ENCODE measurements at regions of chr20 and their contacts with region 1.

Region 1: GRCh38 chr20:52083627-52084232 is 107.8 kb downstream of the ZFP64 start:
- DNase-seq: peak; percentile 57
- H3K4me3 ChIP-seq: no peak overlapping the region
- H3K27ac ChIP-seq: no peak overlapping the region
- H3K4me1 ChIP-seq: no peaks in the 10 kb centered on the region
- H3K27me3 ChIP-seq: no peaks in the 10 kb centered on the region
- CTCF ChIP-seq: peak; percentile 37

Region 2: DNA sequence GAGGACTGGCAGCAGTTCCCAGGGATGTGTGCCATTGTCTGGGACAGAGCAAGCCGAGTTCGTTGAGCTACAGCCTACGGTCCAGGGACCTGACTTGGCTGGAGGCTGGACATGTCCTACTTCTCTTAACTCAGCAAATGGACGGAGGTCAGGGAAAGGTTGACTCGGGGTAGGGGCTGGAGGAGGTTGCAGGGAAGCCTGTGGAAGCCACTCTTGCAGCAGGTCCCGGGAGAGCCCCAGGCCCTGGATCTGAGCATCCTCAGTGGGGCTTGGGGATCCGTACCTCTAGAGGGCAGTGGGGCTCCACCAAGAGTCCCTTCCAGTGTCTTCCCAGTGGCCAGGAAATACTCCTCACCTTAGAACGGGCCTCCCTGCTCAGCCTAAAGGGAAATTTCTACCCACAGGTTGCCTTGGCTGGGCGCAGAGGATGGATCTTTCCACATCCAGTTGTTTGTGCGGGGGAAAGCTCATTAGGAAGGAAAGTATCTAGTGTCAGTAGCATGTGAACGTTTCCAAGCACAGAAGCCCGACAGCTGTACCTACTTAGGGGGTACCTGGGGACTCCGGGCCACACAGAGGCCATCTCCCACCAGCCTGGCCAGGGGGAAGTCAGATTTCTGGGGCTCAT is 711.4 kb before region 1 on chr20:
- intact Hi-C with region 1: loop called (anchors 10 kb)
- DNase-seq: peak; percentile 49
- H3K4me3 ChIP-seq: no peak overlapping the region
- H3K27ac ChIP-seq: no peak overlapping the region
- H3K4me1 ChIP-seq: no peaks in the 10 kb centered on the region
- H3K27me3 ChIP-seq: no peaks in the 10 kb centered on the region
- CTCF ChIP-seq: peak; percentile 73

Region 3: GRCh38 chr20:51579137-51579536 is 504.6 kb before region 1 on chr20:
- intact Hi-C with region 1: no loop called
- DNase-seq: no peak
- H3K4me3 ChIP-seq: no peak overlapping the region
- H3K27ac ChIP-seq: no peak overlapping the region
- H3K4me1 ChIP-seq: no peaks in the 10 kb centered on the region
- H3K27me3 ChIP-seq: no peaks in the 10 kb centered on the region
- CTCF ChIP-seq: no peak

Region 4: DNA sequence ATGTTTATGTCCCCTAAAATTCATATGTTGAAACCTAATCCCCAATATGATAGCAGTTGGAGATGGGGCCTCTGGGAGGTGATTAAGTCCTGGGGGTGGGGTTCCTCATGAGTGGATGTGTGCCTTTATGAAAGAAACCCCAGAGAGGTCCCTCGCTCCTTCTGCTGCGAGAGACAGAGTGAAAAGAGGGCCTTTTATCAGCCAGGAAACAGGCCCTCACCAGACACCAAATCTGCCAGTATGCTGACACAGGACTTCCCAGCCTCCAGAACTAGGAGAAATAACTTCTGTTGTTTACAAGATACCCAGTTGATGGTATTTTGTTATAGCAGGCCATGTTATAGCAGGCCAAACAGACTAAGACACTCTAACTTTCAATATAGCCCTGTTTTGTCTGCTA is 440.3 kb before region 1 on chr20:
- intact Hi-C with region 1: loop called (anchors 5 kb)
- DNase-seq: no peak
- H3K4me3 ChIP-seq: no peak overlapping the region
- H3K27ac ChIP-seq: no peak overlapping the region
- H3K4me1 ChIP-seq: no peaks in the 10 kb centered on the region
- H3K27me3 ChIP-seq: no peaks in the 10 kb centered on the region
- CTCF ChIP-seq: no peak

Region 5: DNA sequence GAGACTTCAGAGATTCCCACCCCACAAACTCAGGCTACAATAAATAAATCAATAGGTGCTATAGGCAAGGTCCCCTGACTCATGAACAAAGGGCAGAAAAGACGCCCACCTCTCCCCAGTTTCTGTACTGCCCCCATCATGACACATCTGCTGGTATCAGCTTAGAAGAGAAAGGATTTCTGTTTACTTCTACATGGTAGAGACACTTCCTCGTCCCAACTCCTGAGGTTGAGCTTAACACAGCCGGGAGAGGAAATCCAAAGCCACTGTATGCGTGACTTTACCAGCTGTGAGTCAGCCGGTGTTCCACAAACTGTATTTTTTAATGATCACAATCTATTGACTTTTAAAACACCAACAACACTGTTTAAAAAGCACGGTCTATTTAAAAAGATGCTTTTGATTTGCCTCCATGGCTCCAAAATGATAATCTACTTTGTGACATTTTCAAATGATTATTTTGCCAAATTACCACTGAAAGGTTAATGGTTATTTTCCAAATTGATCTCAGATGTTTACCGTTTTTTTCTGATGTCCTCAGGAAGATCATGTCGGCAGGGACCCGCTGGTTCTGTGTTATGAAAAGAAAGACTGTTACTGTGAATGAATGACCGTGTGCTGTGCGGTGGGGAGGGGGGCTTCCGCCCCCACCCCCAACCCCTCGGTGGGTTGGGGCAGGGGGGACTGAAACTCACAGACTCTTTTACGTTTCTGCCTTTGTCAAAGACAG is 388.0 kb before region 1 on chr20:
- intact Hi-C with region 1: loop called (anchors 5 kb)
- DNase-seq: no peak
- H3K4me3 ChIP-seq: no peak overlapping the region
- H3K27ac ChIP-seq: peak overlapping the region; percentile 17
- H3K4me1 ChIP-seq: no peaks in the 10 kb centered on the region
- H3K27me3 ChIP-seq: no peaks in the 10 kb centered on the region
- CTCF ChIP-seq: no peak

Region 6: DNA sequence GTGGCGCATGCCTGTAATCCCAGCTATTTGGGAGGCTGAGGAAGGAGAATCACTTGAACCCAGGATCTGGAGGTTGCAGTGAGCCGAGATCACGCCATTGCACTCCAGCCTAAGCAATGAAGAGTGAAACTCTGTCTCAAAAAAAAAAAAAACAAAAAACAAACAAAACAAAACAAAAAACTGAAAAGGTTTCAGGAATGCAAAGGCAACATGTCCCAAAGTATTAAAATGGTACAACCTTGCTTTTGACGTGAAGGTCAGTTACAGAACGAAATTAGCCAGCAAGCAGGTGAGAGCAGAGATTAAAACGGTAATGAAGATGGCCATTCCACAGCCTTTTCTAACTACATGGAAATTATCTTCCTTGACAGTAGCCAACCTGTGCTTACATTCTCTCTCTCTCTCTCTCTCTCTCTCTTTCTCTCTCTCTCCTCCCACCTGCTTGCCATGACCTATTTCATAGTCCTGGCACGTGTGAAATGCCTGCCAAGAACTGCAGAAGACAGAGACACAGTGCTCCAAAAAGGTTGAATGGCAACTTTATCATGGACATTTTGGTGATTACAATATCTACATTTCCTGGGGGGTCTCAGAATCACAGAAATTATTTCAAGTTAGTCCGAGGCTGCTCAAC is 243.0 kb before region 1 on chr20:
- intact Hi-C with region 1: no loop called
- DNase-seq: no peak
- H3K4me3 ChIP-seq: no peak overlapping the region
- H3K27ac ChIP-seq: no peak overlapping the region
- H3K4me1 ChIP-seq: no peaks in the 10 kb centered on the region
- H3K27me3 ChIP-seq: no peaks in the 10 kb centered on the region
- CTCF ChIP-seq: no peak

Measured in colonic mucosa (tissue), 4 donors.